Cardiac septum (tissue), 1 donor: ENCODE measurements at regions of chr5 and their contacts with region 1.

Region 1: GRCh38 chr5:32329308-32329834 is 16.6 kb upstream of the MTMR12 start:
- DNase-seq: no peak

Region 2: DNA sequence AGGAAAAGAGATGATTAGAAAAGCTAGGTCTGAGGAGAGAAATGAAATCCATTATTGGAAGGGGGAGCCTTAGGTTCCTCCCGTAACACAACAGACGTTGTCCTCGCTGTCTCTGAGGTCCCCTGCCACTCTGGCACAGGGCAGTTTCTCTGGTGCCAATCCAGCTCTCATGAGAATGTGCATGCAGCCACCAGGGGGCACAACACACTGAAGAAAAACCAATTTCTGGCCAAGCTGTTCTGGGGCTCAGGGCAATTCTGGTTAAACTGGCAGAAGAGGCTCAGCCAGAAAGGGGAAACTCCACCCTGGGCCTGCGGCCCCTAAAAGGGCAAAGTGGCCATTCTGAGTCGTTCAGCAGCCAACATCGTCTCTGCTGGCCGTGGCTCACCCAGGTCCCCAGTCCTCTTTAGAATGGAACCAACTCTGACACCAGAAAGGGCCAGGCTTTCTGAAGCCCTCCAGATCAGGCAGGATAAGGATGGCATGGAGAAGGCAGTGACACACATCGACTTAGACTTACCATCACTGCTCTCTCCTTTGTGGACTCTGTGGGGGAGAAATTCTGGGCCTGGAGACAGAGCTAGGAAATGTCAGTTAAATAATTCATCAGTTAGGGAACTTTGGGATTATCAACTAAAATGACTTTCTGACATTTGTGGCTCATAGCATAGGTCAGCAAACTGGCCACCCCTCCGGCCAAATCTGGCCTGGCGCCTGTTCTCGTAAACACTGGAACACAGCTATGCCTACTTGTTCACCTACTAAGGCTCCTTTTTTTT is 96.7 kb before region 1 on chr5:
- intact Hi-C with region 1: loop called (anchors 2 kb)
- DNase-seq: peak; percentile 81